GM13976 (cell line): ENCODE measurements at regions of chr11 and their contacts with region 1.

Region 1: DNA sequence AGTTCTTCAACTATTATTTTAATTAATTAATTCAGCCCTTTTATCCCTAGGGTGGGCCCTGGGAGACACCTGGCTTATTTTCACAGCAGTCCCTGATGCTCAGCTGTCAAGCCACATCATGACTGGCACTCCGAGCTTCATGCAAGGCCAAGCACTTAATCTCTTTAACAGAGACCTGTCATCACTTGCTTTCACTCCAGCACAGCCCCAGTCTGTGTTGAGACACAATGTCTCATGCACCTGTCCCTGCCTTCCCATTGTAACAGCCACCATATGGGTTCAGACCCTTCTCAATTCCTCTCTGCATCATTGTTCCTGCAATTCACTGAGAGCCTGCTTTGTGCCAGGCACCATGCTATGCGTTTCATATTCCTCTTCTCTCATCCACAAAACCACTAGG is 222.2 kb upstream of the TENM4 start:
- DNase-seq: no peak
- CTCF ChIP-seq: no peak

Region 2: GRCh38 chr11:79727221-79727620 is 64.2 kb after region 1 on chr11:
- in situ Hi-C with region 1: loop called (anchors 10 kb)
- DNase-seq: no peak
- CTCF ChIP-seq: no peak